Prostate gland (tissue), 2 donors: ENCODE measurements at regions of chr2 and their contacts with region 1.

Region 1: DNA sequence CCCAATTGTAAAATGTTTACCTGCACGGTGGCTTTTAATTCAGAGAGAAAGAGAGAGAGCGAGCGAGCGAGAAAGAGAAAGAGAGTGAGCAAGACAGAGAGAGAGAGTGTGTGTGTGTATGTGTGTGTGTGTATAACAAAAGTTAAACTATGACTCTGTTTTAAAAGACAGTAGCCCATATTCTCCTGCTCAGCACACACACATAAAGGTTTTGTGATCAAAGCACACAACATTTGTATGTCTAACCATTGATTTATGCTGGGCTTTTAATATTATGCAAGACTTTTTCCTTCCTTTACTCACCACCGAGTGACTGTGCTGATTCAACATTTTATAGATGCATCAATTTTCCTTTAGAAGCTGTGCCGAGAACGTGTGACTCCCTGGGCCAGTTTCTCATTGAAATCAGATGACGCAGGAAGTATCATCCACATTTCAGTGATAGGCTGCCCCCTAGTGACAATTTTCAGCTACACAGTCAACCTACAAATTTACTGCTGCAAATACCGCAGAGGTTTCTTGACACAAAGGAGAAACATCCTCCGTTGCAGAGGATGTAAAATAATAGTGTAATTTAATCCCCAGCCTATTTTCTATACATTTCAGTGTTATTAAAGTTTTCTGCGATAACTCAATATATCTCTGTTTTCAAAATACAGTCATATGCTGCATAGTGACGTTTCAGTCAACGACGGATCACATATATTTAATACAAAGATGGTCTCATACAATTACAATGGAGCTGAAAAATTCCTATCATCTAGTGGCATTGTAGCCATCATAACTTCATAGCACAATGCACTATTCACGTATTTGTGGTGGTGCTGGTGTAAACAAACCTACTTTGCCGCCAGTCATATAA is 165.9 kb upstream of the TANK start:
- DNase-seq: peak; percentile 81
- H3K4me3 ChIP-seq: no peak overlapping the region
- H3K27ac ChIP-seq: peak overlapping the region in 1 of 2 donors; percentile 23
- H3K4me1 ChIP-seq: no peaks in the 10 kb centered on the region
- H3K27me3 ChIP-seq: no peaks in the 10 kb centered on the region
- CTCF ChIP-seq: peak; percentile 77 to 93 (median 88)
- POLR2A ChIP-seq: no peak

Region 2: GRCh38 chr2:160109936-160110673 is 884.3 kb before region 1 on chr2:
- intact Hi-C with region 1: loop called (anchors 2 kb)
- DNase-seq: peak; percentile 73
- H3K4me3 ChIP-seq: no peak overlapping the region
- H3K27ac ChIP-seq: no peak overlapping the region
- H3K4me1 ChIP-seq: no peaks in the 10 kb centered on the region
- H3K27me3 ChIP-seq: no peaks in the 10 kb centered on the region
- CTCF ChIP-seq: peak in 3 of 4 experiments; percentile 76 to 77 (median 76)
- POLR2A ChIP-seq: no peak

Region 3: GRCh38 chr2:160194946-160195345 is 799.4 kb before region 1 on chr2:
- intact Hi-C with region 1: no loop called
- DNase-seq: no peak
- H3K4me3 ChIP-seq: no peak overlapping the region
- H3K27ac ChIP-seq: no peak overlapping the region
- H3K4me1 ChIP-seq: no peaks in the 10 kb centered on the region
- H3K27me3 ChIP-seq: no peaks in the 10 kb centered on the region
- CTCF ChIP-seq: no peak
- POLR2A ChIP-seq: no peak

Region 4: DNA sequence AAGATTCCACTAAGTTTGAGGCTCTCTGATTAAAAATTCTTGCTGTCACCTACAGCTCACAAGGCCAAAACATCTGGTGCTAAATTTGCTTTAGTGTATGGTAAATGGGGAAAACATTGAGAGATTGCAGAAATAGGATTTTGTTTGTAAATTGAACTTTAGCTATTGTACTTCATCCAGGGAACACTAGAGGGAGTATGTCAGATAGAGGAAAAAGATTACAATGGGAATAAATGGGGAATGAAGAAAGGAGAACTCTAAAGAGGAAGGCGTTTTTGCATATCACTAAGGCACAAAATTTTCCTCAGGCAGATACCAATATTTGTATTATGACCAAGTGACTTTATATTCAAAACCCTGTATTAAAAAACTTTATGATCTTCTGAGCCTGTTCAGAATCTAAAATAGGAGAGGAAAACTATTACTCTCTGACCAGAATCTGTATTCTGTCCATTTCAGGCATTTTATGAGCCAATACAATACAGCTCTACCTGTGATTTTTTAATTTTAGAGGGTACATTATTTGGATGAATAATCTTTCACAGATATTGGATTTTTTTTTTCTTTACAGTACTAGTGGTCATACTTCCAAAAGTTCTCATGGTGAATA is 742.0 kb before region 1 on chr2:
- intact Hi-C with region 1: loop called (anchors 5 kb)
- DNase-seq: no peak
- H3K4me3 ChIP-seq: no peak overlapping the region
- H3K27ac ChIP-seq: no peak overlapping the region
- H3K4me1 ChIP-seq: no peaks in the 10 kb centered on the region
- H3K27me3 ChIP-seq: no peaks in the 10 kb centered on the region
- CTCF ChIP-seq: peak; percentile 55 to 79 (median 77)
- POLR2A ChIP-seq: no peak

Region 5: GRCh38 chr2:160317181-160318099 is 676.9 kb before region 1 on chr2:
- intact Hi-C with region 1: loop called (anchors 5 kb)
- DNase-seq: no peak
- H3K4me3 ChIP-seq: no peak overlapping the region
- H3K27ac ChIP-seq: no peak overlapping the region
- H3K4me1 ChIP-seq: no peaks in the 10 kb centered on the region
- H3K27me3 ChIP-seq: no peaks in the 10 kb centered on the region
- CTCF ChIP-seq: no peak
- POLR2A ChIP-seq: no peak